ENCODE measurements at regions of chr17 and their contacts with region 1.

Region 1: DNA sequence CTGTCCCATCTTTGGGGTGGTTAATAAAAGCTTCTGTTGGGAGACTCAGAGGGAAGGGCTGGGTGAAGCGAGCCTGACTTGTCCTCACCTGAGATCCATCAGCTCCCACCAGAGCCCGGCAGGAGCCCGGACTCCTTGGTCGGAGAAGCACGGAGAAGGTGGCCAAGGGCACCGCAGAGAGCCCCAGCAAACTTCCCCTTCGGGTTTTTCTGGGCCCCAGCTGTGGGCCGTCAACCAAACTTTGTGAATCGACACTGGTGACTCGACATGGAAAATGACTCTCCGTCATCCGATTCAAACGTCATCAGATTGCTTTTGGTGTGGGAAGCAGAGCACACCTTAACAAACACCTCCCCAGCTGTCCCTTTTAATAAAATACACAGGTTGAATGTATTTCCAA is 21.4 kb downstream of the ENPP7 start:
- DNase-seq: no peak

Region 2: GRCh38 chr17:79991140-79991923 is 239.2 kb after region 1 on chr17:
- in situ Hi-C with region 1: loop called (anchors 25 kb)
- DNase-seq: peak; percentile 69